Mammary epithelial cell (primary cell): ENCODE measurements at regions of chr5 and their contacts with region 1.

Region 1: GRCh38 chr5:151126199-151126645 is 31.4 kb downstream of the ANXA6 start:
- DNase-seq: peak; percentile 38
- H3K4me3 ChIP-seq: no peak overlapping the region
- H3K27ac ChIP-seq: no peak overlapping the region
- H3K4me1 ChIP-seq: no peaks in the 10 kb centered on the region
- H3K27me3 ChIP-seq: no peaks in the 10 kb centered on the region
- CTCF ChIP-seq: peak; percentile 83 to 88

Region 2: DNA sequence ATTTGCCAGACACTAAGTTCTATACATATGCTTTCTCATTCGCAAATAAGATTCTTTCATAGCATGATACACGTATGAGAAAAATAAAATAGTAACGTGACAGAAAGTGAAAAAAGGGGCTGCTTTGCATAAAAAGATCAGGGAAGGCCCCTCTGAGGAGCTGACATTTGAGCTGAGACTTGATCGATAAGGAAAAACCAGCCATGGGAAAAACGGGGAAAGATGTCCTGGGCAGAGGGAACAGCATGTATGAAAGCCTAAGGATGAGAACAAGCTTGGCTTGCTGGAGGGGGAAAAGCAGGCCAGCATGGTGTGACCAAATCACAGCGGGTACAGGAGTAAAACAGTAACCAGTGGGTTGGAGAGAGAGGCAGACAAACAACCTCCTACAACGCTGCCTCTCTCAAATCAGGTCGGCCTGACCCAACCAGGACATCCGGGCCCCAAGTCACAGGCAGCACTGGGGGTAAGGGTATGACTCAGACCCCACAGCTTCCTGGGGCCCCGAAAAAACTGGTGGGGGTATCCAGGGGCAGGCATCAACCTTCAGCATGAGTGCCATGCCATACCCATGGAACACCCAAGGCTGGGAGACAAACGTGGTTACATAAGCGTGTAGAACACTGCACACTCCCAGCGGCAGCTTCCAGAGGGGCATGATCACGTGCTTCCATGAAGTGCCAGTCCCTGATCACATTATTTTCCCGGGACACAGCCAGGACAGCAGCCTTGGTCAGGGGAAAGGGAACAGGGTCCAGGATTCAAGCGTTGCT is 47.5 kb before region 1 on chr5:
- CTCF ChIA-PET with region 1: no interaction called
- dilution Hi-C with region 1: no loop called
- in situ Hi-C with region 1: no loop called
- intact Hi-C with region 1: no loop called
- DNase-seq: no peak
- H3K4me3 ChIP-seq: no peak overlapping the region
- H3K27ac ChIP-seq: peak overlapping the region; percentile 99
- H3K4me1 ChIP-seq: peaks cover 57% of the 10 kb centered on the region
- H3K27me3 ChIP-seq: no peaks in the 10 kb centered on the region
- CTCF ChIP-seq: no peak

Region 3: DNA sequence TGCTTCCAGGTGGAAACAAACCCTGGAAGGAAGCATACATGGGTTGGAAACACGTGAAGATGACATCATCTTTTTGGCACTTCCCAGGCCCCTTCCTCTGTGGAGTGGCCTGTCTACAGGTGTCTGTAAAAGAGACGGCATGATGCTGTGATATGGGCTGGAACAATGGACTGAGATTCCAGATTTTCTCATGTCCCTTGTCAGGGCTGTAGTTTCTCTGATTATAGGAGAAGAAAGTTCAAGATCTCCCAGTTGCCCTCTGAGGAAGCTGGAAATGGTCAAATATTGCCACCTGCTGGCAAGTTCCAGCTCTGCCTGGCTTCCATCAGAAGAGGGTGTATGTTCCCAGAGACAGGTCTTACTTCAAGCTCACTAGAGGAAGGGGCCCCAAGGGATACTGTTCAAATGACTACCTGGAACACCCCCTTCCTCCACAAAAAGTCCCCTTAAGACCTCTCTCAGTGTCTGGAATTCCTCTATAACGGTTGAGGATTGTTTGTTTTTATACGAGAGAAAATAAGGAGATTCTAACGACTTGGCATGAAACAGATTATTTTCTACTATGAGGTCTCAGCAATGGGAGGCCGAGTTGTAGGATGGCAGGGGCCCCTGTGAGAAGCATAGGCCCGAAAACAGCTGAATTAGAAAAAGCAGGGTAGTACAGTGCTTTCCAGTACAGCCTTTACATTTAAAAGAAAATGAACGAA is 38.6 kb after region 1 on chr5:
- CTCF ChIA-PET with region 1: interaction called, 13 read pairs
- dilution Hi-C with region 1: no loop called
- in situ Hi-C with region 1: loop called in 1 of 2 experiments (anchors 5 kb)
- intact Hi-C with region 1: loop called (anchors 1 kb)
- DNase-seq: peak; percentile 60
- H3K4me3 ChIP-seq: no peak overlapping the region
- H3K27ac ChIP-seq: no peak overlapping the region
- H3K4me1 ChIP-seq: no peaks in the 10 kb centered on the region
- H3K27me3 ChIP-seq: peaks cover 3% of the 10 kb centered on the region
- CTCF ChIP-seq: peak; percentile 96

Region 4: GRCh38 chr5:151239237-151239861 is 113.1 kb after region 1 on chr5:
- CTCF ChIA-PET with region 1: no interaction called
- dilution Hi-C with region 1: no loop called
- in situ Hi-C with region 1: no loop called
- intact Hi-C with region 1: loop called (anchors 1 kb)
- DNase-seq: no peak
- H3K4me3 ChIP-seq: no peak overlapping the region
- H3K27ac ChIP-seq: no peak overlapping the region
- H3K4me1 ChIP-seq: no peaks in the 10 kb centered on the region
- H3K27me3 ChIP-seq: peaks cover 2% of the 10 kb centered on the region
- CTCF ChIP-seq: peak; percentile 65 to 77

Region 5: DNA sequence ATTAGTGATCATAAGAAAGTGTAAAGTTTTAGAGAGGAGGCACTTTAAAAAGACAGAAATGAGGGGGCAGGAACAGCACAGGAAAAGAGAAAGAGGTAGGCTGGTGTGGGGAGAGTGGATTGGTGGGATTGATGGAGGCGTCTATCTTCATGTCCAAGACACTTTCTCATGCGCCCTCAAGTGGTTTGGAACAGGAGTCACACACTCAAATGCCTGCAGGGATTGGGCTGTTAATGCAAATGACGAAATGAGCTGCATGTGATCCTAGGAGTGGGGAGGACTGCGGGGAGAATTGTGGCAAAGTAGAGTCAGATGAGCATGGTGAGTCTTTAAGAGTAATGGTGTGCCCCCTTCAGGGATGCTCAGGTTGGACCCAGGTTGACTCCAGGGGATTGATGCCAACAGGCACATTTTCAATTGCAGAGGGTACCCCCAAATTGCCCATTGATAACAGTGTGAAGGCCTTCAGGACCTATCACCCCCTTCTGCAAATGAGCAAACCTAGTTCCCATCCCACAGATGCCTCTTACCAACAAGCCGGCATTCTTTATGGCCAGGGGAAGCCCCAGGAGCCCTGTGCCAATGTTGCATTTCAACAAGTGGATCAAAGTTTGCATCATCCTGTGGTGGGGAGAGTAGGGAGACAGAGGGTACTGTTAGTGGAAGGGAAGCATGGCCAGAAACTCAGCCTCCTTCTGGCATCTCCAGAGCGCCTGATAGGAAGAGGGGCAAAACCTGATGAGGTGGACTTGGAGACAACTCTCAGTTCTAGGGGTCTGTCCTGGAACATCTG is 172.0 kb after region 1 on chr5:
- CTCF ChIA-PET with region 1: no interaction called
- dilution Hi-C with region 1: no loop called
- in situ Hi-C with region 1: loop called in 1 of 2 experiments (anchors 25 kb)
- intact Hi-C with region 1: loop called (anchors 1 kb)
- DNase-seq: peak; percentile 57
- H3K4me3 ChIP-seq: no peak overlapping the region
- H3K27ac ChIP-seq: no peak overlapping the region
- H3K4me1 ChIP-seq: peaks cover 18% of the 10 kb centered on the region
- H3K27me3 ChIP-seq: no peaks in the 10 kb centered on the region
- CTCF ChIP-seq: peak; percentile 61 to 71

Region 6: DNA sequence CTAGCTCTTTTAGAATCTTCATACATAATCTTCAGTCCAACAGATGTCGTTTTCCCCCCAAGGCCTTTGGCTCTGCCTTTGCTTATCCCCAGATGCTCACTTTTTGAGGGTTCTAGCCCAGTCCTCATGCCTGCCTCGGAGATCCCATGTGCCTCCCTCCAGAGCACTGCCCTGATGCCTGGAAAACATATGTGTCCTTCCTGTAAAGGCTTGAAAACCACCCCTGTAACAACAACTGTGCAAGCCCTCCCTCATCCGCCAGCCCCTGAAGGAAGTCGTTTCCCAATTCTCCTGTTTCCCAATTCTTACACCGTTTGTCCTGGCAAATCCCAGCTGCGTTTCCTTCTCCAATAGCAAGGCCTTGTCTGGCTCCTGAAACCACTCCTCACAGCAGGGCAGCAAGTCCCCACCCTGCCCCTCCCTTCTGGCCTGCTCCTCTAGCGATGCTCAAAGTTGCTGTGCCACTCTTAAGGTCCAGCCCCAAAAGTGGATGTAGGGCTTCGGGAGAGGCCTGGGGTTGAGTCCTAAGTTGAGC is 373.3 kb after region 1 on chr5:
- CTCF ChIA-PET with region 1: no interaction called
- dilution Hi-C with region 1: no loop called
- in situ Hi-C with region 1: no loop called
- intact Hi-C with region 1: loop called (anchors 1 kb)
- DNase-seq: no peak
- H3K4me3 ChIP-seq: no peak overlapping the region
- H3K27ac ChIP-seq: no peak overlapping the region
- H3K4me1 ChIP-seq: no peaks in the 10 kb centered on the region
- H3K27me3 ChIP-seq: no peaks in the 10 kb centered on the region
- CTCF ChIP-seq: no peak

Region 7: DNA sequence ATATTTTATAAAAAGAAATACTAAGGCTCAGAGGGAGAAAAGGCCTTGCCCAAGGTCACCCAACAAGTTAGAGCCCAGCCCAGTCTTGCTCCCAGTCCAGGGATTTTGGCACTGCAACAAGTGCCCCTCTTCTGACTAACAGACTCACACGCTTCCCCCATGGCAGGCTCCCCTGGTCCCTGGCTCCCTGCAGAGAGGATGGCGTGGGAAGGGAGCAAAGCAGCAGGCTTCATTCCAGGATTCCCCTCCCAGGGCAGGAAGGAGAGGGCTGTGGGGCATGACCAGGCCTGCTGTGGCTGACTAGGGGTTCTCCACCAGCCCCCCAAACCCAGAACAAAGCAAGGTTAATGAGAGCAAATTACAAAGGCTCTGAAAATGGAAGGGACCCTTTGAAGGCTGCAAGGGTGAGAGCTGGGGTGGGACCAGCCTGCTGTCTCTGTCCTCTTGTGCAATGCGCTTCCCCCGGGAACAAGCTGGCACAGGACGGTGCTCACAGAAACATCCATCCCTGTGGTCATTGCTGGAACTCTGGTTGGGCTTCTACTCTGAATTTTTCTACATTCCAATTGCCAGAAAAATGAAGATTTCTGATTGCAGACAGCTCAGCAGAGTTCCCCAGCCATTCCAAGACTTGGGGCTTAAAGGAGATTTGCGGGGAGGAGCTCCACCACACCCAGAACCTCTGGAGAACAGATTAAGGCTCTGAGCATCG is 502.0 kb after region 1 on chr5:
- CTCF ChIA-PET with region 1: interaction called, 15 read pairs
- dilution Hi-C with region 1: no loop called
- in situ Hi-C with region 1: no loop called
- intact Hi-C with region 1: no loop called
- DNase-seq: peak; percentile 86
- H3K4me3 ChIP-seq: no peak overlapping the region
- H3K27ac ChIP-seq: peak overlapping the region; percentile 69
- H3K4me1 ChIP-seq: peaks cover 66% of the 10 kb centered on the region
- H3K27me3 ChIP-seq: no peaks in the 10 kb centered on the region
- CTCF ChIP-seq: peak; percentile 18 to 30